Activated B cell treated with CpG ODN at 0.5 μM for 24 hours (primary cell): ENCODE measurements at regions of chr2 and their contacts with region 1.

Region 1: DNA sequence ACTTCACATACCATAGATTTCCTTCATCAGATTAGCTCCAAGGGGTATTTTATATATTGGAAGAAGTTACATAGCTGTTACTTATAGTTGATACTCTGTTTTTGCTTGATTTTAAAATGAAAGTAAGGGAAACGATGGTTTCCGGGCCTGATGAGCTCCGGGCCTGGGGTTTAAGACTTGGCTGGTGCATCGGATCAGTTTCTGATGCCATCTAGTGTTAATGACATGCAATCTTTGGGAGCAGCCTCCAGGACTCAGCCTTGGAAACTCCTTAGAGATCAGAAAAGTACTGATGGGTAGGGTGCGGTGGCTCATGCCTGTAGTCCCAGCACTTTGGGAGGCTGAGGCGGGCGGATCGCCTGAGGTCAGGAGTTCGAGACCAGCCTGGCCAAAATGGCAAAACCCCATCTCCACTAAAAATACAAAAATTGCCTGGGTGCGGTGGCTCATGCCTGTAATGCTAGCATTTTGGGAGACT is 47.1 kb upstream of the CNOT11 start:
- DNase-seq: no peak
- ATAC-seq: peak; percentile 91
- H3K4me3 Mint-ChIP-seq: peak overlapping the region; percentile 72
- H3K27ac Mint-ChIP-seq: no peak overlapping the region
- H3K4me1 Mint-ChIP-seq: no peaks in the 10 kb centered on the region
- H3K27me3 Mint-ChIP-seq: peaks cover 1% of the 10 kb centered on the region
- CTCF ChIP-seq: peak; percentile 16

Region 2: DNA sequence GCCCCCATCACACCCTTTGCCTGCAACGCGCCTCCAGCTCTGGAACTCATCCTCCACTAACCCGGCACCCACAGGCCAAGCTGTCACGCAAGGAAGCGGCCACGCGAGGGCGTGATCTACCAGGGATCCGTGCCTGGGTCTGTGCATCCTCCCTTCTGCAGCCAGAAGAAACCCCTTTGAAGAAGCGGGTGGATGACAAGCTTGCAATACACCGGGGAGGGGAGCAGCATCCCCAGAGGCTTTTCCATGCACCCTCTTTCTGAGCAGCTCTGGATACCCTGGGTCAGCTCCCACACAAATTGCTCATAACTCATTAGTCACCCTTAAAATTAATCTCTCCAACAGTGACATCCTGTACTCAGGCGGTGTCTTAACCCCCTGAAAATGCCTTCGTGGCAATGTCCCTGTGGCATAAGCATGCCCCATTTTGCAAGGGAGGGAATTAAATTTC is 595.2 kb before region 1 on chr2:
- CTCF ChIA-PET with region 1: interaction called, 4 read pairs
- POLR2A ChIA-PET with region 1: no interaction called
- intact Hi-C with region 1: loop called (anchors 1 kb)
- DNase-seq: peak; percentile 25
- ATAC-seq: peak; percentile 58
- H3K4me3 Mint-ChIP-seq: no peak overlapping the region
- H3K27ac Mint-ChIP-seq: no peak overlapping the region
- H3K4me1 Mint-ChIP-seq: peaks cover 2% of the 10 kb centered on the region
- H3K27me3 Mint-ChIP-seq: peaks cover 24% of the 10 kb centered on the region
- CTCF ChIP-seq: no peak

Region 3: DNA sequence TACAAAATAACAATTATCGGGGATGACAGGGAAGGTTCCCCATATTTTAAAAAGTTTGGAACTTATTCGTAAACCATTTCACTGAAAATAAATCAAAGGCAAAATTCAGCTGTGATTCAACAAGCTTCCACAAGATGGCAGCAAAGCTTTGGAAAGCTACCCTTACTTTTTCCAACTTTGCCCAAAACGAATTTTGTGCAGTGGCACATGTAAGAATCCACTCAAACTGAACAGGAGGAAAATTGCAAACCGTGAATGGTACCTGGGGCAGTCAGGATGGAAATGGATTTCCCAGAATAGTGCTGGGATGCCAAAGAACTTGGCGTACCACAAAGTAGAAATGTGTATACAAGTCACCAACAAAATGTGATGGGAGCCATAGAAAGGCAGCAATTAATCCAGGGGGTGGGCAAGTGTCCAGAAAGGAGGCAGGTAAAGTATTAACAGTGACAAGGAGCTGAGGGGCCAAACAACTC is 192.8 kb before region 1 on chr2:
- CTCF ChIA-PET with region 1: interaction called, 126 read pairs
- POLR2A ChIA-PET with region 1: interaction called, 10 read pairs
- intact Hi-C with region 1: loop called (anchors 1 kb)
- DNase-seq: no peak
- ATAC-seq: no peak
- H3K4me3 Mint-ChIP-seq: no peak overlapping the region
- H3K27ac Mint-ChIP-seq: no peak overlapping the region
- H3K4me1 Mint-ChIP-seq: peaks cover 20% of the 10 kb centered on the region
- H3K27me3 Mint-ChIP-seq: no peaks in the 10 kb centered on the region
- CTCF ChIP-seq: peak; percentile 93

Region 4: GRCh38 chr2:101036562-101037457 is 168.8 kb before region 1 on chr2:
- CTCF ChIA-PET with region 1: interaction called, 76 read pairs
- POLR2A ChIA-PET with region 1: no interaction called
- intact Hi-C with region 1: loop called (anchors 1 kb)
- DNase-seq: no peak
- ATAC-seq: no peak
- H3K4me3 Mint-ChIP-seq: no peak overlapping the region
- H3K27ac Mint-ChIP-seq: no peak overlapping the region
- H3K4me1 Mint-ChIP-seq: no peaks in the 10 kb centered on the region
- H3K27me3 Mint-ChIP-seq: peaks cover 7% of the 10 kb centered on the region
- CTCF ChIP-seq: peak; percentile 45

Region 5: GRCh38 chr2:101173707-101174295 is 31.8 kb before region 1 on chr2:
- CTCF ChIA-PET with region 1: interaction called, 12 read pairs
- POLR2A ChIA-PET with region 1: interaction called, 6 read pairs
- intact Hi-C with region 1: no loop called
- DNase-seq: peak; percentile 39
- ATAC-seq: peak; percentile 100
- H3K4me3 Mint-ChIP-seq: peak overlapping the region; percentile 29
- H3K27ac Mint-ChIP-seq: peak overlapping the region; percentile 87
- H3K4me1 Mint-ChIP-seq: peaks cover 35% of the 10 kb centered on the region
- H3K27me3 Mint-ChIP-seq: peaks cover 2% of the 10 kb centered on the region
- CTCF ChIP-seq: no peak